Endothelial cell of umbilical vein (primary cell): ENCODE measurements at regions of chr13 and their contacts with region 1.

Region 1: DNA sequence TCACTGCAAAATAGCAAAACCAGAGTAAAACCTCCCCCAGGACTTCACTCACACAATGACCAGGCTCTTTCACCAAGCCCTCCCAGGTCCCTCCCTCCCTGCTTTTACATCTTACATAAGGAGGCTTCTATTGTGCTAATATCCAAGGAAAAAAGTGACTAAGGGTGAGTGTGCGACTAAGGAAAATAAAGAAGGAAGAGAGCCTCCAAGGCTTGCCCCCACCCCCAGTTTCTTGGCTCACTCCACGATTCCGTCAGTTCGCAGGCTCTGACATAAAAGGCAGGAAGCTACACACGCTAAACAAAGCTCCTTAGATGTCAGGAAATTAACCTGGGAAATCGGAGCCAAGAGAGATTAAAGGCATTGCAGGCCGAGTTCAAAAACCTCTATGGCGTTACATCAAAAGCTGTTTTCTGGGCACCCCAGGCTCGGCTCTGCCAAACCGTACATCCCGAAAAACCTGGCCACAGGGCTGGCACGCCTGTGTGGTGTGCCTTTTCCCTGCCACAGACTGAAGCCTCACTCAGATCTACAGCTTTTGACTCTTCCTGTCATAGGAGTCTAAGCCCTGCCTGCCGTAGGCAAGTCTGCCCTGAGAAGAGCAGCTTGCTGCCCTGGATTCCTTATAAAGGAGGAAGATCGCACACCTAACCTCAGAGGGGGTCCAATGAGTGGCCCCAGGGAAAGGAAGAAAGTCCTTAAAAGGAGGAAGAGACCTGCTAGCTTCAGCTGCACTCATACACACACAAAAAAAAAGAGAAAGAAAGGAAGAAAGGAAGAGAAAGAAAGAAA is 67.0 kb upstream of the SERP2 start:
- DNase-seq: peak; percentile 99
- H3K4me3 ChIP-seq: peak overlapping the region in 1 of 3 experiments; percentile 50
- H3K27ac ChIP-seq: peak overlapping the region; percentile 100
- H3K4me1 ChIP-seq: peaks cover 23% of the 10 kb centered on the region
- H3K27me3 ChIP-seq: no peaks in the 10 kb centered on the region
- CTCF ChIP-seq: no peak
- POLR2A ChIP-seq: no peak

Region 2: DNA sequence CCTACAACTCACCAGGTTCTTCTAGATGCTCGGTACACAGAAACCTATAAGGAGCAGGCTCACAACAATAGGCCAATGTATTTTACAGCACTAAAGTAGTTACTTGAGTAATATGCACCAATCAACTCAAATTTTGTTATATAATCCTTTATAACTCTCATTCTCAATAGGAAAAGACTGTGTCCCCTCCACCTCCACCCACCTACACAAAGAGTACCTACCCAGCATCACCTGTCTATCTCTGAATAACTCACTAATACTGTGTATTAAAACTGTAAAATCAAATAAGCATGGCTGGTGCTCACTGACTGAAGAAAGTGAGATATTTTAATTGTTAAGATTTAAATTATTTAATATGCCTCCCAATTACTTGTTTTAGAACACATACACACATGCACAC is 666.1 kb before region 1 on chr13:
- CTCF ChIA-PET with region 1: no interaction called
- POLR2A ChIA-PET with region 1: no interaction called
- dilution Hi-C with region 1: no loop called
- intact Hi-C with region 1: no loop called
- DNase-seq: no peak
- H3K4me3 ChIP-seq: no peak overlapping the region
- H3K27ac ChIP-seq: no peak overlapping the region
- H3K4me1 ChIP-seq: no peaks in the 10 kb centered on the region
- H3K27me3 ChIP-seq: no peaks in the 10 kb centered on the region
- CTCF ChIP-seq: no peak
- POLR2A ChIP-seq: no peak

Region 3: GRCh38 chr13:44141725-44142539 is 164.7 kb before region 1 on chr13:
- CTCF ChIA-PET with region 1: no interaction called
- POLR2A ChIA-PET with region 1: no interaction called
- dilution Hi-C with region 1: no loop called
- intact Hi-C with region 1: loop called (anchors 1 kb)
- DNase-seq: peak; percentile 96
- H3K4me3 ChIP-seq: peak overlapping the region; percentile 43 to 68 (median 50)
- H3K27ac ChIP-seq: peak overlapping the region; percentile 71
- H3K4me1 ChIP-seq: peaks cover 18% of the 10 kb centered on the region
- H3K27me3 ChIP-seq: no peaks in the 10 kb centered on the region
- CTCF ChIP-seq: no peak
- POLR2A ChIP-seq: peak; percentile 79

Region 4: GRCh38 chr13:44237276-44237767 is 69.3 kb before region 1 on chr13:
- CTCF ChIA-PET with region 1: interaction called, 16 read pairs
- POLR2A ChIA-PET with region 1: interaction called, 4 read pairs
- dilution Hi-C with region 1: no loop called
- intact Hi-C with region 1: loop called (anchors 1 kb)
- DNase-seq: peak; percentile 97
- H3K4me3 ChIP-seq: no peak overlapping the region
- H3K27ac ChIP-seq: peak overlapping the region; percentile 84
- H3K4me1 ChIP-seq: peaks cover 21% of the 10 kb centered on the region
- H3K27me3 ChIP-seq: no peaks in the 10 kb centered on the region
- CTCF ChIP-seq: no peak
- POLR2A ChIP-seq: no peak

Region 5: DNA sequence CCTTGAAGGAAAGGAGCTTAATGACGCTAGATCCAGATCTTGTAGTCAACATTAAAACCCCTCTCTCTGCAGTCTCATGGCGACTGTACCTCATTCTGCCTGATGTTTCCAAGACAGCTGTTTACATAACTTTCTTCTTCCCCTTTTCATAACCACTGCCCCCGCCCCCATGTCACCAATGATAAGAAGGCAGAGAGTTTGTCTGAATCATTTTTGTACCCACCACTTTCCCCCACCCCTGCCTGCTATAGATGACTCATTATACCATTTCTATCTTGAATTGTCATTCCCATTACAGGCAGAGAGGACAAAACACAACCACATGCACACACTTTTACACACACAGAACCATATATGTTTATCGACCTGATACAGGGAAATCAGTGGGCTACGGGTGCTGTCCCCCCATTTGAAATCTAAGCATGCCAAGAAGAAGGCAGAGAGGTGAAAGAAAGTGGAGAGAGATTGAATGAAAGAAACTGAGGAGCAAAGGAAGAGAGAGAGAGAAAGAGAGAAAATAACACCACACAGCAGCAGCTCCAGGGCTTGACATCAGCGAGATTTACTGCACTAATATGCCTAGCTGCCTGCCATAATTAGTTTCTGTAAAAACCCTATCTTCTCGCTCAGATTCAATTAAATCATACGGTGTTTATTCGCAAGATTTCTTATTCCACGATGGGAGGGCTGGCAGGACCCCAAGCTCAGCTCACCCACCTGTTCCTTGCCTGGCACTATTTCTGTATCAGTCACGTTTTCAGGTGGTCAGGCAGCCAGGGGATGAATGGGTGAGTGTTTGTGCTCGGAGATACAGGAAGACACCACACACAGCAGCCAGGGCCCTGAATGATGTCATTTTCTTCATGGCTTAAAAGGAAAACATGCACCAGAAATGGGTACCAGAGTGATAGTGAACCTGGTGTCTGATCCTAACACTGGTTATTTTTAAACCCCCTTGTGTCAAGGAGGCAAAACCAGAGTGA is 47.3 kb before region 1 on chr13:
- CTCF ChIA-PET with region 1: no interaction called
- POLR2A ChIA-PET with region 1: interaction called, 4 read pairs
- dilution Hi-C with region 1: no loop called
- intact Hi-C with region 1: loop called (anchors 1 kb)
- DNase-seq: peak; percentile 67
- H3K4me3 ChIP-seq: no peak overlapping the region
- H3K27ac ChIP-seq: peak overlapping the region; percentile 55
- H3K4me1 ChIP-seq: peaks cover 24% of the 10 kb centered on the region
- H3K27me3 ChIP-seq: no peaks in the 10 kb centered on the region
- CTCF ChIP-seq: no peak
- POLR2A ChIP-seq: no peak

Region 6: DNA sequence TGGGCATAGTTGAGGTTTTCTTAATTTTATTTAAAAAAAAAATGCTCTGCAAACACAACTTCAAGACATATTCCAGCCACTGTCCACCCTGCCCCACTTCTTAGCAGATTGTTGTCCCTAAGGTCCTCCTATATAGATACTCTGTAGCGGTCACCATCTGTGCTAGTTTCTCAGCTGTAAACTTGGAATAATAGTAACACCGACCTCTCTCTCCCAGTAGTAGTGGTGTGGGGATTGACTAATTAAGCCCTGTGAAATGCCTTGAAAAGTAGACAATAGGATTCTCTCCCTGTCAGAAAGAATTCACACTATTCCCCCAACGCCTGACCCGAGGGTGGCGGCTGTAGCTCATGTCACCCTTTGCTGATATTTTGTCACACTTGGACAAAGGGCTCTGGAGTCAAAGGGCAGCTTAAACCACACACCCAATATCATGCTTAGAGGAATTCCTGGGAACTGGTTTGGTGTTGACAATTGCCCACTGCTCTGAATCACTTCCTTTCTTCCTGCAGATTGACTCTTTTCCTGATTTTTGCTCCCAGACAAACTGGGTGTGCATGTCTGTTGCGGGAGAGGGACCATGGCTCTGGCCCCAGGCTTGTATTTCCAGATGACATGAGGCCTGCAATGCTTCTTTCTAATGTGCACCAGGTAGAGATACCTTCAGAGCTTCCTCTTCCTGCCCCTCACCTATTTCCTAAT is 57.9 kb after region 1 on chr13:
- CTCF ChIA-PET with region 1: interaction called, 3 read pairs
- POLR2A ChIA-PET with region 1: no interaction called
- dilution Hi-C with region 1: no loop called
- intact Hi-C with region 1: loop called (anchors 2 kb)
- DNase-seq: peak; percentile 90
- H3K4me3 ChIP-seq: no peak overlapping the region
- H3K27ac ChIP-seq: peak overlapping the region; percentile 89
- H3K4me1 ChIP-seq: peaks cover 51% of the 10 kb centered on the region
- H3K27me3 ChIP-seq: no peaks in the 10 kb centered on the region
- CTCF ChIP-seq: no peak
- POLR2A ChIP-seq: peak; percentile 25